ENCODE measurements at regions of chr4 and their contacts with region 1.

Region 1: GRCh38 chr4:54423066-54423465 is 194.0 kb downstream of the PDGFRA start:
- DNase-seq: no peak
- H3K4me3 ChIP-seq: no peak overlapping the region
- H3K27ac ChIP-seq: no peak overlapping the region
- H3K27me3 ChIP-seq: peaks cover 7% of the 10 kb centered on the region
- CTCF ChIP-seq: no peak

Region 2: GRCh38 chr4:54091637-54092404 is 331.2 kb before region 1 on chr4:
- CTCF ChIA-PET with region 1: no interaction called
- POLR2A ChIA-PET with region 1: no interaction called
- DNase-seq: no peak
- H3K4me3 ChIP-seq: peak overlapping the region; percentile 75
- H3K27ac ChIP-seq: no peak overlapping the region
- H3K27me3 ChIP-seq: peaks cover 10% of the 10 kb centered on the region
- CTCF ChIP-seq: no peak

Region 3: GRCh38 chr4:54433686-54434085 is 10.6 kb after region 1 on chr4:
- CTCF ChIA-PET with region 1: interaction called, 12 read pairs
- POLR2A ChIA-PET with region 1: no interaction called
- DNase-seq: no peak
- H3K4me3 ChIP-seq: no peak overlapping the region
- H3K27ac ChIP-seq: no peak overlapping the region
- H3K27me3 ChIP-seq: no peaks in the 10 kb centered on the region
- CTCF ChIP-seq: peak; percentile 65